ENCODE measurements at regions of chr19 and their contacts with region 1.

Region 1: GRCh38 chr19:45439569-45440254 is 16.0 kb upstream of the ERCC1 start:
- DNase-seq: peak; percentile 68 to 94 (median 82)
- ATAC-seq: peak; percentile 47 to 70 (median 66)
- H3K4me3 ChIP-seq: peak overlapping the region; percentile 48 to 70 (median 64)
- H3K27ac ChIP-seq: peak overlapping the region; percentile 72 to 93 (median 85)
- H3K4me1 ChIP-seq: peaks cover 9 to 12% (median 10%) of the 10 kb centered on the region in 3 donors
- H3K27me3 ChIP-seq: no peaks in the 10 kb centered on the region
- CTCF ChIP-seq: peak; percentile 97 to 99 (median 99)

Region 2: GRCh38 chr19:45370410-45371204 is 69.1 kb before region 1 on chr19 and contains the start of gene ERCC2:
- intact Hi-C with region 1: no loop called
- DNase-seq: peak; percentile 99 to 100 (median 100)
- ATAC-seq: peak; percentile 98 to 99 (median 99)
- H3K4me3 ChIP-seq: peak within 1 kb of the TSS; percentile 64 to 85 (median 75)
- H3K27ac ChIP-seq: peak within 1 kb of the TSS; percentile 46 to 84 (median 72)
- H3K4me1 ChIP-seq: no peaks in the 10 kb centered on the region
- H3K27me3 ChIP-seq: no peaks in the 10 kb centered on the region
- CTCF ChIP-seq: no peak
- total RNA-seq, gene ERCC2: 7.1 to 13.0 (median 8.1) TPM

Region 3: DNA sequence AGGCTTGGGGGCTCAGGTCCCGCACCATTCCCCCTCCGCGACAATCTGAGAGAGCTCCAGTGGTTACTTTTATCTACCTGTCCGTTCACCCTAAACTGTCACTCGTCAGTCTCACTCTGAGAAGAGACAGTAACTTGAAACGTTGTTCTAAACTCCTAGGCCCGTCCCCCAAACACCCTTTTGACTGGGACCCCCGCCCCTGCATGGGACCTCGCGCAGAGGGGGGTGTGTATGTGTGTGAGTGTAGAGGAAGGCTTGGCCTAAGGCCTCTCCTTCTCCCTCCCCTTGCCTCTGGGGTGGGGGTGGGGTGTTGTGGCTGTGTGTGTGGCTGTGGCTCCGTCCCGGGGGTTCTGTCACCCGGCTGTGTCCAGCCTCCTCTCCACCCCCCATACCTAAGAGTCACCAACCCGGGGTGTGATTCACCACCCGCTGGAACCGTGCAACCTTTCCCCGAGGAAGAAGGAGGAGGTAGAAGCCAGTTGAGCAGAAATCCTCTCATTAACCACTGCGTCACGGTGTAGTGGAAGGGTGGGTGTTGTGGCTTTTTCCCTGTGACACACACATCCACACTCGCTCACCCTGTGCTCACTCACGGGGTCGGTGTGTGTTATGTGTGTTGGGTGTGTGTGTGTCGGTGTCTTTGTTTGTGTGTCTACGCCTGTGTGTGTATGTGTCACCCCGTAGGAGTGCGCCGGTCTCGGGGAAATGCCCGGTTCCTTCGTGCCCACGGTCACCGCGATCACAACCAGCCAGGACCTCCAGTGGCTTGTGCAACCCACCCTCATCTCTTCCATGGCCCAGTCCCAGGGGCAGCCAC is 30.4 kb after region 1 on chr19:
- intact Hi-C with region 1: loop called in 1 of 3 experiments (anchors 5 kb)
- DNase-seq: peak in 4 of 6 donors; percentile 43 to 58 (median 47)
- ATAC-seq: no peak
- H3K4me3 ChIP-seq: peak overlapping the region in 3 of 4 donors; percentile 33 to 64 (median 54)
- H3K27ac ChIP-seq: peak overlapping the region; percentile 89 to 96 (median 94)
- H3K4me1 ChIP-seq: peaks cover 0 to 13% (median 9%) of the 10 kb centered on the region in 3 donors
- H3K27me3 ChIP-seq: no peaks in the 10 kb centered on the region
- CTCF ChIP-seq: no peak

Region 4: GRCh38 chr19:45478454-45479238 is 38.9 kb after region 1 on chr19:
- intact Hi-C with region 1: loop called (anchors 2 to 5 kb)
- DNase-seq: peak; percentile 81 to 91 (median 88)
- ATAC-seq: peak; percentile 95 to 96 (median 95)
- H3K4me3 ChIP-seq: peak overlapping the region in 3 of 4 donors; percentile 2 to 42 (median 41)
- H3K27ac ChIP-seq: peak overlapping the region; percentile 94 to 97 (median 96)
- H3K4me1 ChIP-seq: peaks cover 0 to 4% (median 0%) of the 10 kb centered on the region in 3 donors
- H3K27me3 ChIP-seq: no peaks in the 10 kb centered on the region
- CTCF ChIP-seq: peak; percentile 89 to 96 (median 94)

Region 5: GRCh38 chr19:45484273-45484945 is 44.7 kb after region 1 on chr19:
- intact Hi-C with region 1: loop called in 2 of 3 experiments (anchors 2 to 5 kb)
- DNase-seq: no peak
- ATAC-seq: no peak
- H3K4me3 ChIP-seq: no peak overlapping the region
- H3K27ac ChIP-seq: no peak overlapping the region
- H3K4me1 ChIP-seq: no peaks in the 10 kb centered on the region
- H3K27me3 ChIP-seq: no peaks in the 10 kb centered on the region
- CTCF ChIP-seq: no peak